Endothelial cell of umbilical vein (primary cell): ENCODE measurements at regions of chr11 and their contacts with region 1.

Region 1: DNA sequence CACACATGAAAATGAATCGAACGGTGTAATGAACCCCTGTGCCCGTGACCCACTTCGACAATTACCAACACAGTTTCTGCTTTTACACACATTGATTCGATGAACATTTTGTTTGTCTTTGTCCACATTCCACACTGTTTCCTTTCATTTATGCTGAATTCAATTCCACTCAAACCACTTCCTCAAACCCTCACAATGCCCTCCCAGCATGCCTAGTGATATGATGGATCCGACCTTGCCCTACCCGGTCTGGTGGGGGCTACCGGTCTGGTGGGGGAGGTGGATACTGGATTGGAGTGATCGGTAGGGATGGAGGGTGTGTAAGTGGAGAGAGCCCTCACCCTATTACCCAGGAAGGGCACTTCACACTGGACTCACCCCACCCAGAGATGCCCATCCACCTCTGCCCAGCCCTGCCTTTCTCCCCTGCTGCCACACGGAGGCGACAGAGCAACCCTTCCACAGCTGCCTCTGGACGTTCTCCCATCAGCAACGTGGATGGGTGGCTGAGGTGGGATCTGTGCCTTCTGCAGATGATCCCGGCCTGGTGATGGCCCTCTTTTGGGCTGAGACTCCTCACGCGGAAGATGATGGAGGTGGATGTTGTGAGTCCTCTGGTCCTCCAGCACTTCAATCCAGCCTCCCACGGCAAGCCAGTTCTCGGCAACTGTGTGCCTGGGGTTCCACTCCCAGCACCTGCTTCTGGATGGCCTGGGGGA is 33.0 kb upstream of the P2RY2 start:
- DNase-seq: peak; percentile 75
- H3K4me3 ChIP-seq: peak overlapping the region in 1 of 3 experiments; percentile 24
- H3K27ac ChIP-seq: peak overlapping the region; percentile 53
- H3K4me1 ChIP-seq: peaks cover 23% of the 10 kb centered on the region
- H3K27me3 ChIP-seq: no peaks in the 10 kb centered on the region
- CTCF ChIP-seq: peak; percentile 93 to 97
- POLR2A ChIP-seq: no peak

Region 2: DNA sequence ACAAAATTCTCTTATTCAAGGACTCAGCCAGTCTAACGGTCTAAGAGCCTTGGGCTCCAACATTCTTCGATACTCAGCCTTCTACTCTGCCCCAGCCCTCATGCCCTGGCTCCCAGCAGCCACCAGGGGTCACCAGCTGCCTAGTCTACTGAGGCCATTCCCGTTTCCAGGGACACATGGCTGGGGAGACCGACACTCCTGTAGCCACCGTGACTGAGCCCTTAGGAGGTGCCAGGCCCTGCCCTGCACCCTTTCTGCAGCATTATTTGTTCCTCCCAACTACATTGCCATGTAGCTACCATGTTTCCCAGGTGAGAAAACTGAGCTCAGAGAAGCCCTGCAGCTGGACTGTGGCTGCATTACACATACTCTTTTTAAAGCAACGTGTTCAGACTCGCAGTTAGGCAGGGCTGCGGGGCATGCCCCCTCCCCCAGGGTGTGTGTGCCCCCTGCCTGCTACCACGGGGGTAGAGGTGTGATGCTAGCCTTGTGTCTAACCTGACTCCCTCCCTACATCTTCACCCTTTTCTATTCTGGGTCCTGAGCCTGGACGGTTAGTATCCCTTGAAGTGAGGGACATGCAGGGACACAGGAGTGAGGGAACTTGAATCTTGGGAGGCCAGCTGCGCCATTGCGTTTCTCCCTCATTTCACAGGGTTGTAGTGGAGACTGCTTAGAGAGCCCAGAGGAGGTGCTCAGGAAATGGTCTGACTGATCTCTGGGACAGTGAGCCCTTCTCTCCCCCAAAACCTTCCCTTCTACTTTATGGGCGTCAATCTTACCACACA is 353.4 kb before region 1 on chr11:
- CTCF ChIA-PET with region 1: interaction called, 196 read pairs
- POLR2A ChIA-PET with region 1: no interaction called
- dilution Hi-C with region 1: no loop called
- intact Hi-C with region 1: no loop called
- DNase-seq: peak; percentile 80
- H3K4me3 ChIP-seq: no peak overlapping the region
- H3K27ac ChIP-seq: no peak overlapping the region
- H3K4me1 ChIP-seq: peaks cover 9% of the 10 kb centered on the region
- H3K27me3 ChIP-seq: no peaks in the 10 kb centered on the region
- CTCF ChIP-seq: peak; percentile 91 to 97
- POLR2A ChIP-seq: no peak

Region 3: DNA sequence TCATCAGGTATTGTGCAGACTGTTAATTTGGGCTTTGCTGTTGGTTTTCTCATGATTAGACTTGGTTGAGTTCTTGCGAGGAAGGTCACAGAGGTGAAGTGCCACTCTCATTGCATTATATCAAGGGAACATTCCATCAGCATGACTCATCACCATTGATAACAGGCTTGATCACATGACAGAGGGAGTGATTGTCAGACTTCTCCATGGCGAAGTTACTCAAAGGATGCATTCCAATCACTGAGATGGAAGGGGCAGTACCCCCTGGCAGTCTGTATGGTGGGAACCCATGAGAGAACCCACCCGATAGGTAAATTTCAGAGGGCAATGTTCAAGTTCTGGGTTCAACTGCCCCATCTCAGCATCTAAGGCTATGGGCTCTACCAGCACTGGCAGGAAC is 13.6 kb after region 1 on chr11:
- CTCF ChIA-PET with region 1: interaction called, 6 read pairs
- POLR2A ChIA-PET with region 1: no interaction called
- dilution Hi-C with region 1: no loop called
- intact Hi-C with region 1: loop called (anchors 1 kb)
- DNase-seq: peak; percentile 81
- H3K4me3 ChIP-seq: no peak overlapping the region
- H3K27ac ChIP-seq: peak overlapping the region; percentile 52
- H3K4me1 ChIP-seq: peaks cover 13% of the 10 kb centered on the region
- H3K27me3 ChIP-seq: no peaks in the 10 kb centered on the region
- CTCF ChIP-seq: no peak
- POLR2A ChIP-seq: no peak

Region 4: GRCh38 chr11:73218106-73218829 is 33.2 kb after region 1 on chr11 and contains the start of gene P2RY2:
- CTCF ChIA-PET with region 1: interaction called, 16 read pairs
- POLR2A ChIA-PET with region 1: no interaction called
- dilution Hi-C with region 1: no loop called
- intact Hi-C with region 1: loop called (anchors 1 kb)
- DNase-seq: peak; percentile 59
- H3K4me3 ChIP-seq: peak within 1 kb of the TSS in 2 of 3 experiments; percentile 0 to 30
- H3K27ac ChIP-seq: no peak within 1 kb of the TSS
- H3K4me1 ChIP-seq: no peaks in the 10 kb centered on the region
- H3K27me3 ChIP-seq: no peaks in the 10 kb centered on the region
- CTCF ChIP-seq: peak; percentile 58 to 75
- POLR2A ChIP-seq: no peak
- total RNA-seq, gene P2RY2: 4.4 and 5.6 TPM in 2 replicates

Region 5: GRCh38 chr11:73242251-73243079 is 57.4 kb after region 1 on chr11:
- CTCF ChIA-PET with region 1: interaction called, 107 read pairs
- POLR2A ChIA-PET with region 1: interaction called, 3 read pairs
- dilution Hi-C with region 1: no loop called
- intact Hi-C with region 1: loop called (anchors 1 kb)
- DNase-seq: peak; percentile 84
- H3K4me3 ChIP-seq: no peak overlapping the region
- H3K27ac ChIP-seq: no peak overlapping the region
- H3K4me1 ChIP-seq: peaks cover 11% of the 10 kb centered on the region
- H3K27me3 ChIP-seq: no peaks in the 10 kb centered on the region
- CTCF ChIP-seq: peak; percentile 88 to 89
- POLR2A ChIP-seq: no peak

Region 6: DNA sequence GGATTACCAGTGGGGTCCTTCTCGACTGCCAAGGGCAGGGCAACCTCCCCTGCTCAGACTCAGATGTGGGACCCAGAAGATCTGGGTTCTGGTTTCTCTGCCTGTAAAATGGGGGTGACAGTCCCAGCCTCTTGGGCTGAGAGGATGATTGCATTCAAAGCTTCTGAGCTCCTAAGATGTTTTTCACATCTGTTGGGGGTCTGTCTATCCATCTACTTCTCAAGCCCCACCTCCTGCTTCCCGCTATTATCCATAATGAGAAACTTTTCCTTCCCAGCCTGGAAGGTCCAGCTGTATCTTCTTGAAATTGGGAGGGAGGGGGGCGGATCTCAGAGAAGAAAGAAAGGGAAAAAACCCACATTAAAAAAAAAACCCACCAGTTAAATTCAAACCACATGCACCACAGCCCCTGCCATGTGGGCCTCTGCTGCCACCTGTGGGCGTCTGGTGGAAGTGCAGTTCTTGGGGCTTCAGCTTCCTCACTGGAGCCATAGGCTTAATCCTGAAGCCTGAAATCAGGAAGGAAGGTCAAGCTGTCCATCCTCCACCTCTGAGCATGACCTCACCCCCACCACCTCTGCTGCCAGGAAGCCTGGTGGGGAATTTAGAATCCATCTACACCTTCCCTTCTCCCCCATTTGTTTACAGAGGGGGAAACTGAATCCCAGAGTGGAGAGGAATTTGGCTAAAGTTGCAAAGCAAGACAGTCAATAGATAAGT is 150.3 kb after region 1 on chr11:
- CTCF ChIA-PET with region 1: interaction called, 20 read pairs
- POLR2A ChIA-PET with region 1: no interaction called
- dilution Hi-C with region 1: no loop called
- intact Hi-C with region 1: loop called (anchors 1 kb)
- DNase-seq: peak; percentile 88
- H3K4me3 ChIP-seq: no peak overlapping the region
- H3K27ac ChIP-seq: peak overlapping the region; percentile 70
- H3K4me1 ChIP-seq: peaks cover 33% of the 10 kb centered on the region
- H3K27me3 ChIP-seq: no peaks in the 10 kb centered on the region
- CTCF ChIP-seq: peak; percentile 95 to 96
- POLR2A ChIP-seq: no peak